ENCODE measurements at regions of chr10 and their contacts with region 1.

Region 1: DNA sequence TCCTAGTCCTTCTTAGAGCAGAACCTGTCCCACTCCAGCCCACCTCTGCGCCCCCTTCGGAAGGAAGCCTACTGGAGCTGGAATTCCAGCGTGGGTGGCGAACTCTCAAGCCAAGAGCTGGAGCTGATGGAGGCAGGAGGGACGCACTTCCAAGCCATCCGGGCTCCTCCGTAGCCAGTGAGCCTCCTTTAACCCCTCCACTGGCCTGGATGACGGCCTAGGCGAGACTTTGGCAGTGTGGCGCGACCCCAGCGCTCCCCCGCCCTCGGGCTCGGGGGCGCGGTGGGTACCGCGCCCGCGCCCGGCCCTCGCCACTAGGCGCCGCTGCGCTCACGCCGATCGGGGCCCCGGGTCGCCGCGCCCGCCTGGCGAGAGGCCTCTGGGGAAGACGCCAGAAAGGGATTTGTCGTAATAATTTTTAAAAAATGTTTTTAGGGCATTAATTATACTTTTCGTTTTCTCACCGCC is 5.1 kb upstream of the EMX2 start:
- DNase-seq: peak in 2 of 3 donors; percentile 56 to 66
- H3K4me3 ChIP-seq: peak overlapping the region in 1 of 7 experiments; percentile 28
- H3K27ac ChIP-seq: no peak overlapping the region
- H3K4me1 ChIP-seq: peaks cover 0 to 41% (median 25%) of the 10 kb centered on the region in 4 experiments
- H3K27me3 ChIP-seq: peaks cover 17 to 100% (median 74%) of the 10 kb centered on the region in 5 experiments

Region 2: GRCh38 chr10:117552156-117552631 is 14.7 kb after region 1 on chr10:
- CTCF ChIA-PET with region 1: interaction called, 28 read pairs
- POLR2A ChIA-PET with region 1: interaction called, 3 read pairs
- DNase-seq: no peak
- H3K4me3 ChIP-seq: no peak overlapping the region
- H3K27ac ChIP-seq: no peak overlapping the region
- H3K4me1 ChIP-seq: peaks cover 0 to 8% (median 4%) of the 10 kb centered on the region in 4 experiments
- H3K27me3 ChIP-seq: peaks cover 26 to 99% (median 56%) of the 10 kb centered on the region in 5 experiments